CD8-positive, alpha-beta T cell (primary cell): ENCODE measurements at regions of chr7 and their contacts with region 1.

Region 1: GRCh38 chr7:129271500-129272355 is 46.9 kb downstream of the AHCYL2 start:
- DNase-seq: peak; percentile 35 to 86 (median 67)
- ATAC-seq: peak; percentile 100
- H3K4me3 ChIP-seq: no peak overlapping the region
- H3K4me3 Mint-ChIP-seq: peak overlapping the region; percentile 72
- H3K27ac ChIP-seq: no peak overlapping the region
- H3K27ac Mint-ChIP-seq: no peak overlapping the region
- H3K4me1 ChIP-seq: no peaks in the 10 kb centered on the region
- H3K4me1 Mint-ChIP-seq: peaks cover 6% of the 10 kb centered on the region
- H3K27me3 ChIP-seq: no peaks in the 10 kb centered on the region
- H3K27me3 Mint-ChIP-seq: no peaks in the 10 kb centered on the region
- CTCF ChIP-seq: peak; percentile 78

Region 2: DNA sequence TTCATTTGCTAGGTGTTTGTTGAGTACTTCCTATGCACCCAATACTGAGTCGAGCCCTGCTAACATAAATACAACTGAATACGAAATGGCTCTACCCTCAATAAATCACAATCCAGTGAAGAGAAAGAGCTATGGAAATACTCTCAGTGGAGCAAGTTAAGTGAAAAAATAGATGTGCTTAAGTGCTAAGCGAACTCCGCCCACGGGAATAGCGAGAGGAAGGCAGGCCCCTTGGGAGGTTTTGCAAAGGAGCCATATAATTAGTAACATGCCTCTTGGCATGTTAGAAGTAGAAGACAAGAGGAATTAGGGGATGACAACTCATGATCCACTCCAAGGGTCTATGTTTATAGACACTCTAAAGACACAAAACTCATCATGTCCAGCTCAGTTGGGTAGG is 170.0 kb before region 1 on chr7:
- CTCF ChIA-PET with region 1: no interaction called
- POLR2A ChIA-PET with region 1: no interaction called
- intact Hi-C with region 1: no loop called
- DNase-seq: no peak
- ATAC-seq: no peak
- H3K4me3 ChIP-seq: no peak overlapping the region
- H3K4me3 Mint-ChIP-seq: no peak overlapping the region
- H3K27ac ChIP-seq: no peak overlapping the region
- H3K27ac Mint-ChIP-seq: no peak overlapping the region
- H3K4me1 ChIP-seq: no peaks in the 10 kb centered on the region
- H3K4me1 Mint-ChIP-seq: no peaks in the 10 kb centered on the region
- H3K27me3 ChIP-seq: no peaks in the 10 kb centered on the region
- H3K27me3 Mint-ChIP-seq: no peaks in the 10 kb centered on the region
- CTCF ChIP-seq: no peak

Region 3: GRCh38 chr7:129163875-129164544 is 107.7 kb before region 1 on chr7:
- CTCF ChIA-PET with region 1: interaction called, 4 read pairs
- POLR2A ChIA-PET with region 1: no interaction called
- intact Hi-C with region 1: loop called in 1 of 2 experiments (anchors 5 kb)
- DNase-seq: peak in 3 of 9 experiments; percentile 18 to 69 (median 61)
- ATAC-seq: peak; percentile 54
- H3K4me3 ChIP-seq: no peak overlapping the region
- H3K4me3 Mint-ChIP-seq: no peak overlapping the region
- H3K27ac ChIP-seq: no peak overlapping the region
- H3K27ac Mint-ChIP-seq: no peak overlapping the region
- H3K4me1 ChIP-seq: peaks cover 4% of the 10 kb centered on the region
- H3K4me1 Mint-ChIP-seq: peaks cover 7% of the 10 kb centered on the region
- H3K27me3 ChIP-seq: no peaks in the 10 kb centered on the region
- H3K27me3 Mint-ChIP-seq: no peaks in the 10 kb centered on the region
- CTCF ChIP-seq: peak; percentile 86

Region 4: DNA sequence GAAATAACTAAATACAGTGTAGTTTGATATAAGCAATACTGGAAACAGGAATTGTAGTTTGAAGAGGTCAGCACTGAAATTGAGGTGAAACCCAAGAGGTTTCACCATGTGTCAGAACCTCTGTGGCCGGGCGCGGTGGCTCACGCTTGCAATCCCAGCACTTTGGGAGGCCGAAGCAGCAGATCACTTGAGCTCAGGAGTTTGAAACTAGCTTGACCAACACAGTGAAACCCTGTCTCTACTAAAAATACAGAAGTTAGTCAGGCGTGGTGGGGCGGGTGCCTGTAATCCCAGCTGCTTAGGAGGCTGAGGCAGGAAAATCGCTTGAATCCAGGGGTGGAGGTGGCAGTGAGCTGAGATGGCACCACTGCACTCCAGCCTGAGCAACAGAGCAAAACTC is 33.2 kb before region 1 on chr7:
- CTCF ChIA-PET with region 1: interaction called, 12 read pairs
- POLR2A ChIA-PET with region 1: interaction called, 4 read pairs
- intact Hi-C with region 1: no loop called
- DNase-seq: no peak
- ATAC-seq: no peak
- H3K4me3 ChIP-seq: no peak overlapping the region
- H3K4me3 Mint-ChIP-seq: no peak overlapping the region
- H3K27ac ChIP-seq: no peak overlapping the region
- H3K27ac Mint-ChIP-seq: no peak overlapping the region
- H3K4me1 ChIP-seq: no peaks in the 10 kb centered on the region
- H3K4me1 Mint-ChIP-seq: peaks cover 26% of the 10 kb centered on the region
- H3K27me3 ChIP-seq: no peaks in the 10 kb centered on the region
- H3K27me3 Mint-ChIP-seq: no peaks in the 10 kb centered on the region
- CTCF ChIP-seq: no peak

Region 5: GRCh38 chr7:129285111-129285510 is 13.4 kb after region 1 on chr7:
- CTCF ChIA-PET with region 1: interaction called, 11 read pairs
- POLR2A ChIA-PET with region 1: no interaction called
- intact Hi-C with region 1: no loop called
- DNase-seq: no peak
- ATAC-seq: no peak
- H3K4me3 ChIP-seq: no peak overlapping the region
- H3K4me3 Mint-ChIP-seq: no peak overlapping the region
- H3K27ac ChIP-seq: no peak overlapping the region
- H3K27ac Mint-ChIP-seq: no peak overlapping the region
- H3K4me1 ChIP-seq: no peaks in the 10 kb centered on the region
- H3K4me1 Mint-ChIP-seq: peaks cover 2% of the 10 kb centered on the region
- H3K27me3 ChIP-seq: no peaks in the 10 kb centered on the region
- H3K27me3 Mint-ChIP-seq: no peaks in the 10 kb centered on the region
- CTCF ChIP-seq: no peak

Region 6: GRCh38 chr7:129468087-129468486 is 196.4 kb after region 1 on chr7:
- CTCF ChIA-PET with region 1: interaction called, 3 read pairs
- POLR2A ChIA-PET with region 1: no interaction called
- intact Hi-C with region 1: loop called in 1 of 2 experiments (anchors 5 kb)
- DNase-seq: no peak
- ATAC-seq: no peak
- H3K4me3 ChIP-seq: no peak overlapping the region
- H3K4me3 Mint-ChIP-seq: no peak overlapping the region
- H3K27ac ChIP-seq: no peak overlapping the region
- H3K27ac Mint-ChIP-seq: no peak overlapping the region
- H3K4me1 ChIP-seq: no peaks in the 10 kb centered on the region
- H3K4me1 Mint-ChIP-seq: peaks cover 2% of the 10 kb centered on the region
- H3K27me3 ChIP-seq: no peaks in the 10 kb centered on the region
- H3K27me3 Mint-ChIP-seq: no peaks in the 10 kb centered on the region
- CTCF ChIP-seq: no peak